Gastrocnemius medialis (tissue), 4 donors: ENCODE measurements at regions of chr19 and their contacts with region 1.

Region 1: GRCh38 chr19:4713384-4713951 is 10.2 kb downstream of the DPP9 start:
- DNase-seq: peak; percentile 95 to 99
- ATAC-seq: peak; percentile 84 to 86
- H3K4me3 ChIP-seq: peak overlapping the region; percentile 7 to 41 (median 18)
- H3K27ac ChIP-seq: peak overlapping the region; percentile 89 to 100 (median 97)
- H3K4me1 ChIP-seq: peaks cover 56 to 63% of the 10 kb centered on the region in 2 donors
- H3K27me3 ChIP-seq: no peaks in the 10 kb centered on the region
- CTCF ChIP-seq: peak in 2 of 5 experiments; percentile 16 to 28
- POLR2A ChIP-seq: peak; percentile 66 to 74

Region 2: DNA sequence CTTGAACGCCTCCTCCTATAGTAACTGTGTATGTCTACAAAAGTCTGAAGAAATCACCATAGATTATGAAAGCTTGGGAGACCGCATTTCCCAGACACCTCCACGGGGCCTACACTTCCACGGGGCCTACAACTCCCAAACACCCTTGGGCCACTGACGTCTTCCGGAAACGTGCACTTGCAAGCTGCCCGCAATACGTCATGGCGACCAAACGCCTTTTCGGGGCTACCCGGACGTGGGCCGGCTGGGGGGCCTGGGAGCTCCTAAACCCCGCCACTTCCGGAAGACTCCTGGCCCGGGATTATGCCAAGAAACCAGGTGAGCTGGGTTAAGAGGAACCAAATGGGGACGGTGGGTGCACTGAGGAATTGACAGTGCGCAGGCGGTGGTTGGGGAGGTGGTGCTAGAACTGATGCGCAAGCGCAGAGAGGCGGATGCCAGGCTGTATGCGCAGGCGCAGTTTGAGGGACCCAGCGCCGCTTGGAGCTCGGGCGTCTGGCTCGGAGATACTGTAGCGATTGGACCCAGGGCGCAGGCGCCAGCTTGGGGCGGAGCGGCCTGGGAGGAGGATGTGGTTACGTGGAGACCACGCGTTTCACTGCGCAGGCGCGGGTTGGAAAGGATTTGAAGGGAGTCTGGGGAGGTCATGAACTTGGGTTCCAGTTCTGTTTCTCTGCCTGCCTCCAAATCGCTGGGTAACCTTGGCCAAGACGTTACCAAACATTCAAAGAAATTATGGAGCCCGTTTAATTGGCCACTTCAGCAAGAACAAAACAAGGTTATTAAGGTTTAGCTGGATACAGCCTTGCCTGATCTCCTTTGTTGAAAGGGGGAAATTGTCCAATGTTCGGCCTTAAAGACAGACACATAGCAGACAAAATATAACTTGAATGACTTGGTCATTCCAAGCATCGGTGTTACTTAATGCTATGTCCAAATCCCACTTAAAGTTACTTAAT is 950.7 kb before region 1 on chr19 and contains the start of gene MRPL54:
- in situ Hi-C with region 1: no loop called
- intact Hi-C with region 1: loop called (anchors 5 kb)
- DNase-seq: peak; percentile 98 to 99
- ATAC-seq: peak; percentile 95 to 96
- H3K4me3 ChIP-seq: peak within 1 kb of the TSS; percentile 83 to 97 (median 90)
- H3K27ac ChIP-seq: peak within 1 kb of the TSS; percentile 92 to 100 (median 98)
- H3K4me1 ChIP-seq: peaks cover 21 to 22% of the 10 kb centered on the region in 2 donors
- H3K27me3 ChIP-seq: no peaks in the 10 kb centered on the region
- CTCF ChIP-seq: no peak
- POLR2A ChIP-seq: peak; percentile 68 to 78
- total RNA-seq, gene MRPL54: 23.3 to 86.3 (median 63.3) TPM

Region 3: DNA sequence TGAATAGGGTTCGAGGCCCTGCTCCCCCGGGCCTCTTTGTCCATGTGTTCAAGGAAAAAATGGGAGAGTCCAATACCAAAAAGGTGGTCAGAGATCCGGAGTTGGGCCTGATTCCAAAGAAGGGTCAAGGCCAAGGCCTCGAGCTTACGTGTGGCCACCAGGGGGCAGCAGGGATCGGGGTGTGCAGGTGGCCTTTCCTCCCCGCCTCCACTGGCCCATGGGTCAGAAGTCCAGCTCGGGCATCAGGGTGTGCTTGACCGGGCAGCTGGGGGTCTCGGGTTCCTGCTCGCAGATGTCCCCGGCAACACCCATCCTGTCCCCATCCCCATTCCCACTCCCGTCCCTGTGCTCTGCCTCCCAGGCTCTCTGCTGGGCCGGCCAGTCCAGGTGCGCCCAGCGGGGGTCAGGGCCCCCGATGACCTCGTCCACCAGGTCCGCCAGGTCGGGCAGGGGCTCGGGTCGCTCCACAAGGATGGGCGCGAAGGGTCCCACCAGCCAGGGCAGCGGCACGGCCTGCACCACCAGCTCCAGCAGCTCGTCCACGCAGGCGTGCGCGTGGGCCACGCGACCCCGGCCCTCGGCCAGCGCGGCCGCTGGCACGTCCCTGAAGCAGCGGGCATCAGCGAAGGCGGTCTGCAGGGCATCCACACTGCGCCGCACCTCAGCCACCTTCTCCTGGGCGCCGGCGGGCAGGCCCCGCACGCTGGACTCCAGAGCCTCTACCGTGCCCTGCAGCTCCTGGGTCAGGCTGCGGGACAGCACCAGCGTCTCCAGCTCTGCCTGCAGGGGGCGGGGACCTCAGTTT is 190.0 kb before region 1 on chr19:
- in situ Hi-C with region 1: no loop called
- intact Hi-C with region 1: loop called (anchors 5 kb)
- DNase-seq: peak; percentile 35 to 70
- ATAC-seq: peak in 1 of 2 donors; percentile 14
- H3K4me3 ChIP-seq: no peak overlapping the region
- H3K27ac ChIP-seq: peak overlapping the region; percentile 43 to 97 (median 68)
- H3K4me1 ChIP-seq: peaks cover 11 to 13% of the 10 kb centered on the region in 2 donors
- H3K27me3 ChIP-seq: no peaks in the 10 kb centered on the region
- CTCF ChIP-seq: peak; percentile 26 to 87 (median 73)
- POLR2A ChIP-seq: no peak

Region 4: DNA sequence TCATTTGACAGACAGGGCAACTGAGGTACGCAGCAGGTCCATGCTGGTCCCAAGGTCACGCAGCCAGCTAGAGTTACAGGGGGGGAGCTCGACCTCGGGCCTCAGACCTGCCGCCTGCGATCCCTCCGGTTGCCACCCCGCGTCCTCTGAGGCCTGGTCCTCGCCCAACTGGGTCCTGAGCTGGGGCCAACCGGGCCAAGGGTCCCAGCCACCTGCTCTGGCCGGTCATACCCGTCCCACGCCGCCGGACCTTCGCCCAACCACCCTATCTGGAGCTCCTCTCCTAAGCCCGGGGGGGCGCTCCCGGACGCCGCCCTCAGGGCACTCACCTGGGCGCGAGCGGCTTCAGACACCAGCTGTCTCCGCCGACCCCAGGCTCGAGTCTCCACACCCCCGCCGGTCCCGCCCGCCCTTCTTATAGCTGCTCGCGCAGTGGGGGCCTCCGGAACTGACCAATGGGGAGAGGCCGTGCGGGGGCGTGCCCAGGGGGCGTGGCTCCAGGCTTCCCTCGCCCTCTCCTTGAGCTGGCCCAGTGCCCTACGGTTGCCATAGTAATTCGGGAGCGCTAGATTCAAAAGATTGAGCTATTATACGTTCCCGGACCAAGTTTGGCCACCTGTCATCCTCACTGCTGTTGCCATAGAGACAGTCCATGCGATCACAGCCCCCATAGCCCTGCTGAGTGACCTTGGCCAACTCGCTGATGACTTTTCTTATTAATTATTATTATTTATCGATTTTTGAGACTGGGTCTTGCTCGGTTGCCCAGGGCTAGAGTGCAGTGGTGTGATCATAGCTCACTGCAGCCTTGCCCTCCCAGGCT is 178.4 kb before region 1 on chr19 and contains the start of gene PLIN5:
- in situ Hi-C with region 1: no loop called
- intact Hi-C with region 1: loop called (anchors 5 kb)
- DNase-seq: peak; percentile 90 to 92
- ATAC-seq: peak; percentile 54 to 56
- H3K4me3 ChIP-seq: peak within 1 kb of the TSS; percentile 58 to 61 (median 58)
- H3K27ac ChIP-seq: peak within 1 kb of the TSS; percentile 89 to 98 (median 92)
- H3K4me1 ChIP-seq: peaks cover 37 to 38% of the 10 kb centered on the region in 2 donors
- H3K27me3 ChIP-seq: no peaks in the 10 kb centered on the region
- CTCF ChIP-seq: peak in 4 of 5 experiments; percentile 9 to 30 (median 16)
- POLR2A ChIP-seq: peak; percentile 97 to 98
- total RNA-seq, gene PLIN5: 23.5 to 127 (median 52.9) TPM

Region 5: DNA sequence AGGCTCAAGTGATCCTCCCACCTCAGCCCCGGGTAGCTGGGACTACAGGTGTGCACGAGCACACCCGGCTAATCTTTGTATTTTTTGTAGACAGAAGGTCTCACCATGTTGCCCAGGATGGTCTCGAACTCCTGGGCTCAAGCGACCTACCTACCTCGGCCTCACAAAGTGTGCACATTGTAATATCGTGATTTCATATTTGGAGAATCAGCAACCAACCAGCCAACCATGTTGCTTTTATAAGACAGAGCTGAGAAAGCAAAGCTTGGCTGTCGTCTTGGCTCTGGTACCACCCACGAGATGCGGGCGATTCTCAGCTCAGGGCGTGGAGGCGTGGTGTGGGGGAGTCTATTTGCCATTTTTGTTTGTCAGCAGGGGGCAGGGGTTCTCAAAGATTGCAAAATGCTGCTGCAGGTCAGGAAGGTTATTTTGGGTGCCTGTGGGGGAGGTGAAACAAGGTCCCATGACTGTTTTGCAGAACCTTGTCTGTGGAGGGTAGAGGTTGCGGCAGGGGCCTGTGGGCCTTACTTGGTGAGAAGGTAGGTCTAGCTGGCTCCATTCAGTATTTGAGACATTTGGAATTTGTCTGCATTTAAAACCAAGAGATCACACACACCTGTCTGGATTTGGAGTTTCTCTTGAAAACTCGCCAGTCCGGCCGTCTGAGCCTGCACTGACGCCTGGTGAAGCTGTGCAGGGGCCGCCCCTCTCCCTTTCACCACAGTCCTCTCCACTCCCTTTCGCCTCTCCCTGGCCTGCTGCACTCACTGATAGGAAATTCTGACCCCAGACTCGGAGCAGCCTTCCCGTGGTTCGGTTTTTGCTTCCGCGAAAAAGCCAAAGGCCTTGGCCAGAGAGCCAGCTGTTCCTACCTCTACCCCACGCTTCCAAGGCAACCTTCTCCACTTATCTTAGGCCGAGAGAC is 58.8 kb before region 1 on chr19:
- in situ Hi-C with region 1: no loop called
- intact Hi-C with region 1: no loop called
- DNase-seq: no peak
- ATAC-seq: peak; percentile 33 to 45
- H3K4me3 ChIP-seq: no peak overlapping the region
- H3K27ac ChIP-seq: peak overlapping the region in 2 of 4 donors; percentile 28 to 35
- H3K4me1 ChIP-seq: peaks cover 0 to 4% of the 10 kb centered on the region in 2 donors
- H3K27me3 ChIP-seq: no peaks in the 10 kb centered on the region
- CTCF ChIP-seq: no peak
- POLR2A ChIP-seq: no peak

Region 6: DNA sequence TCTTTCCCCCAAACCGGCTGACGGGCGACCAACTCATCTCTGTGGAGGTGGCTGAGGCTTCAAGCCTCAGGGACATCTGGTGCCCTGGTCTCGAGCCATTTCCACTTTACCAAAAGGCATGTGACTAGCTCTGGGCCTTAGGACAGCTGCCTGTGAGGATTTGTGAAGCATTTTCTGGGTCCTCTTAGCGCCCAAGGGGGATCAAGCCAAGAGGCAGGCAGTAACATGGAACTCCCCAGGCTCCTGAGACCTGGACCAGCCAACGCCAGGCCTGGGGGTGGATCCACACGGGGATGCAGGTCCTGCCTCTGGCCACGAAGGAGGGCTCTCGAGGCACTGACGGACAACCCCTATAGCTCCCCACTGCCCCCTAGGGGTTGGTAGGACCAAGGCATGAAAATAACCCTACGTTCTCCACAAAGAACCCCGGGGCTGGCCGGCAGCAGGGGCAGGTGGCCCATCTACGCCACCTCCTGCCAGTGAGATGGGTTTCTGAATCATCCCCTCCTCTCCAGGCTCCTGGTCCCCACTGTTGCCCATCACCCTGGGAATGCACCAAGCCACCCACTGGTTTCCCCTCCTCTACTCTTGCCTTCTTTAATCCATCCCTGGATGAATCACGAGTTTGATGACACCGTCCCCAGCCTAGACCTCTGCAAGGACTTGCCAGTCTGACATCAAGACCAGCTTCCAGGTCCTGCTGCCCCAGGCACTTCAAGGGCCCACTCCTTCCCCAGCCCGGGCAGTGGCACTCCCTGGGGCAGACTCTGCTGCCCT is 36.3 kb before region 1 on chr19:
- in situ Hi-C with region 1: no loop called
- intact Hi-C with region 1: loop called (anchors 1 kb)
- DNase-seq: peak in 1 of 2 donors; percentile 80
- ATAC-seq: peak; percentile 76 to 81
- H3K4me3 ChIP-seq: no peak overlapping the region
- H3K27ac ChIP-seq: peak overlapping the region; percentile 81 to 90 (median 87)
- H3K4me1 ChIP-seq: peaks cover 8 to 14% of the 10 kb centered on the region in 2 donors
- H3K27me3 ChIP-seq: no peaks in the 10 kb centered on the region
- CTCF ChIP-seq: peak; percentile 60 to 92 (median 73)
- POLR2A ChIP-seq: peak in 1 of 2 donors; percentile 21

Region 7: GRCh38 chr19:4694209-4694987 is 19.1 kb before region 1 on chr19:
- in situ Hi-C with region 1: no loop called
- intact Hi-C with region 1: loop called (anchors 1 kb)
- DNase-seq: peak; percentile 96 to 100
- ATAC-seq: peak; percentile 70 to 71
- H3K4me3 ChIP-seq: peak overlapping the region in 3 of 4 donors; percentile 21 to 35 (median 35)
- H3K27ac ChIP-seq: peak overlapping the region; percentile 95 to 97 (median 96)
- H3K4me1 ChIP-seq: peaks cover 53 to 57% of the 10 kb centered on the region in 2 donors
- H3K27me3 ChIP-seq: no peaks in the 10 kb centered on the region
- CTCF ChIP-seq: no peak
- POLR2A ChIP-seq: peak; percentile 77 to 87

Region 8: DNA sequence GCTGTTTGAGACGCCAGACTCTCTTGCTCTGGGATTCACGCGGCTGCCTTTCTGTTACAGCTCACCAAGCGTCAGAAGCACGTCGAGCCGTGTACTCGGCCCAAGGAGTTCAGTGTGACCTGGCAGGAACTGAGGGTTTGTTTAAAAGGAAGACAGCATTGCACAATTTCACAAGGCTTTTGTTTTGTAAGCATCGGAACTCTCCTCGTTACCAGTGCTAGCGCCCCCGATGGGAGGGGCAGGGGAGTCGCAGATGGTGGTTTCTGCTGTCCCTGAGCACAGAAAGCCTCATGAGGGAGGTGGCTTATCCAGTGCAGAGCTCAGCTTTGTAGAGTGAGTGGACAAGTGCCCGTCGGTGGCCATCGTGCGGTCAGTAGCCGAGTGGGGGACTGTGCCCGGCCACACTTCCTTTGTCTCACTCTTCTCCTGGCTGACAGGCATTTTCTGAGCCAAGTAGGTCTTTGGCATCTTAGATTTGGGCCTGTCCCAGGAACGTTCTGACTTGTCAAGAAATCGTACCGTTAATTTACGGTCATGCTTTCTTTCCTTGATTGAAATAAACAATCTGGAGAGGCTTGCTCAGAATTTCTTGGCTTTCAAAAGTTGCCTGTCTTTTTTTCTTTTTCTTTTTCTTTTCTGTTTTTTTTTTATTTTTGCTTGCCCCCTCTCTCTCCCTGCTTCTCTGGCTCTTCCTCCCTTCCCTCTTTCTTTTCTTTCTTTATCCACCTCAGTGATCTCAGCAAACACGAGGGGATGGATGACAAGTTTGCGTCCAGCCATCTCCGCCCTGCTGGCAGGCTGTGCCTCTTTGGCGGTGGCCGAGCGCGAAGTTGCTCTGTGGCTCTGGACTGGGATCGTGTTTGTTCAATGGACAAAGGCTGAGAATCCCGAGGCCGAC is 263.2 kb after region 1 on chr19:
- in situ Hi-C with region 1: no loop called
- intact Hi-C with region 1: loop called (anchors 10 kb)
- DNase-seq: peak; percentile 92 to 94
- ATAC-seq: peak; percentile 82 to 86
- H3K4me3 ChIP-seq: peak overlapping the region; percentile 26 to 40 (median 38)
- H3K27ac ChIP-seq: peak overlapping the region; percentile 85 to 96 (median 93)
- H3K4me1 ChIP-seq: peaks cover 80 to 82% of the 10 kb centered on the region in 2 donors
- H3K27me3 ChIP-seq: no peaks in the 10 kb centered on the region
- CTCF ChIP-seq: peak in 4 of 5 experiments; percentile 28 to 54 (median 38)
- POLR2A ChIP-seq: peak; percentile 64 to 79